GM10248 (cell line): ENCODE measurements at regions of chr11 and their contacts with region 1.

Region 1: GRCh38 chr11:96342961-96343711 is at the start of gene MAML2:
- DNase-seq: peak; percentile 92
- CTCF ChIP-seq: peak; percentile 78

Region 2: GRCh38 chr11:96014217-96014616 is 328.9 kb before region 1 on chr11:
- CTCF ChIA-PET with region 1: interaction called, 10 read pairs
- POLR2A ChIA-PET with region 1: no interaction called
- DNase-seq: peak; percentile 12
- CTCF ChIP-seq: no peak

Region 3: GRCh38 chr11:96091476-96091875 is 251.7 kb before region 1 on chr11:
- CTCF ChIA-PET with region 1: interaction called, 30 read pairs
- POLR2A ChIA-PET with region 1: no interaction called
- DNase-seq: peak; percentile 13
- CTCF ChIP-seq: no peak

Region 4: DNA sequence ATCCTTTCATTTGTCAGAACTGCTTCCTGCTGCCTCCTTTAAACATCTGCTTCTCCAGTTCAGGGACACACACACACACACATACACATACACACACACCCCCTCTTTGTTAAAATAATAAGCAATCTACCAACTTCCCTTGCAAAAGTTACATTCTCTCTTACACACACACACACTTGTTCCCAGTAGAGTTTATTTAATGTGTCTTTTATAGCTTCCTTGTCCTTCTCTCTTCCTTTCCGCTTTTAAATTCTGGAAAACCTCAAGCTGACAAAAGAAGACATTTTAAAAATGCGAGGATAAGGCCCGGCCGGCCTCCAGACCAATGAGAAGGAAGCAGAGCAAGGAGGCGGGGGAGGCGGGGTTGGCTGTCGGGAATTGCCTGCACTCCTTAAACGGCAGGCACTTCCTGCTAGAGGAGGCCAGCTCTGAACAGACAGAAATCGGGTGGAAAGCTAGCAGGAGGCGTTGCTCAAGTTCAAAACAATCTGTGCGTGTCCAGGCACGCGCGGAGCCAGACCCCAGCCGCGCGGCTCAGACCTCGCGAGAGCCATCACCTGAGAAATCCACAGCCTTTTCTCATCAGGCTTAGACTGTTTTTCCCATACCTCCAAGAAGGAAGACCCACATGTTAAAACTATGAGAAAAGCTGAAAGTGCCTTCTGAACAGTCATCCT is 100.0 kb before region 1 on chr11:
- CTCF ChIA-PET with region 1: interaction called, 23 read pairs
- POLR2A ChIA-PET with region 1: no interaction called
- DNase-seq: peak; percentile 85
- CTCF ChIP-seq: no peak

Region 5: DNA sequence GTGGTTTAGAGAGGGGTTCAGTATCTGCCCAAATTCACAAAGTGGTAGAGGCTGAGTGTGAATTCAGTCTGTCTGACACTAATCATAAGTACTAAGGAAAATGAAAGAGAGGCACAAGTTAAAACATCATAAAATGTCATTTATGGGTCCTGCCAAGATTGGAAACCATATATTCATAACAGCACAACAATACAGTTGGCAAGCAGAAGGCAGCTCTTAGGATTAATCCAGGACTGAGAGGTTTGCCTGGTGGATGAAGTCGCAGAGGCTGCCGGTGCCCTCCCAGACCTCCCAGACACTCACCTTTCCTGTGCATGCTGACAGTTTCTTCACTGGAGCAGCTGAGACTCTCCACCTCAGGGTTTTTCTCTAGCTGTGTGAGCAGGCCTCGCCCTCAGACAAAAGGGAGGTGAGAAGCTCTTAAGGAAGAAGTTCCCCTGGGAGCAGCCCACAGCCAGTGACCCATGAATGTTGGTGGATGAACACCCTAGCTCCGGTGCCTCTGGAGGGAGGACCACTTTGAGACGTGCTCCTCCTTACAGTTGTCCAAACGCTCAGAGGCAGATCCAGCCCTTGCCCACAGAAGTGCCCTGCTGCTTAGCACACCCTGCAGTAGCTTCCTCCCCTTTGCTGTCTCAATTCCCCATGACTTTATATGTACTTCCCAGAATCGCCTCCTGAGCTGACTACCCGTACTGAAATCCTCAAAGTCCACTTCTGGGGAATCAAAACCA is 43.8 kb before region 1 on chr11:
- CTCF ChIA-PET with region 1: interaction called, 12 read pairs
- POLR2A ChIA-PET with region 1: no interaction called
- DNase-seq: no peak
- CTCF ChIP-seq: no peak

Region 6: DNA sequence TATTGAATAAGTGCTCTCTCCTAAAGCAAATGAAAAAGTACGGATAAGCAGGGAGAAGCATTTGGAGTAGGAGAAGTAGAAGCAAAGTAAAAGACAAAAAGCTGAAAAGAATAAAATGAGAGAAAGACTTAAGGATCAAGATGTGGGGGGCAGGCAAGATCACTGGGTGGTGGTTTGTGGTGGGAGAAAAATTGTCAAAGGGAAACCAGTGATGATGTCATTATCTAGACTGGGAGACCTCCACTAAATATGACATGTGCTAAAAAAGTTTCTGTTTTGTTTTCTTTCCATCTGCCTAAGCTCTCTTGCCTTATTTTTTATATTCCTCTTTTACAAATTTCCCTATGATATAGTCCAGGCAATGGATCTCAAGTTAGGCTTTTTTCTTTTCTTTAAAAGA is 14.7 kb after region 1 on chr11:
- CTCF ChIA-PET with region 1: interaction called, 17 read pairs
- POLR2A ChIA-PET with region 1: no interaction called
- DNase-seq: peak; percentile 11
- CTCF ChIP-seq: no peak

Region 7: GRCh38 chr11:96464700-96465307 is 121.7 kb after region 1 on chr11:
- CTCF ChIA-PET with region 1: no interaction called
- POLR2A ChIA-PET with region 1: no interaction called
- DNase-seq: peak; percentile 67
- CTCF ChIP-seq: peak; percentile 73